ENCODE measurements at regions of chr9 and their contacts with region 1.

Region 1: DNA sequence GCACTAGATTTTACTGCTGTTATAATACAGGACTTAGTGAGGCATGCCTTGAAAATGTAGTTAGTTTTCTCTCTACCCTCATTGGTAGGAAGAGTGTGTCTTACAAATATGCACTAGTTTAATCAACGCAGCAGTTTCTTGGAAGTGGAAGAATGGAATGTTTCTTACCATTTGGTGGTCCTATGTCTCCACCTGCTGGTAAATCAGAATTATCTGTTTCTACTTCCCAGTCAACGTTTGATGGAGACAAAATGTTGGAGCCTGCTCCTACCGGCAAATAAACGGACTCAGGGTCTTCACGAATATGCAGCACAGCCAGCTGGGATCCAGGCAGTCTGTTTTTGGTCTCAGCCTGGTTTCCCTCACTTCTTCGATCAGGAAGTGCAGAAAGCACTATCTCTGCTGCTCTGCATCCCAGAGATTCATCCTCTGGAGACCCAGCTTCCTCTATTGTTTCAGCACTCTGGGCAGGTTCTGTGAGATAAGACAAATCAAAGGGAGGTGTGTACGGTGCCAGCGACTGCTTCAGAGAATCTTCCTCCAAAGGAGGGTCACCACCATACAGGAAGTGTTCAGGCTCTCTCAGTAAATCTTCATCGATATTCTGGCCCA is 59.5 kb upstream of the PCA3 start:
- DNase-seq: no peak
- ATAC-seq: peak; percentile 39
- H3K4me3 Mint-ChIP-seq: no peak overlapping the region
- H3K27ac Mint-ChIP-seq: no peak overlapping the region
- H3K4me1 Mint-ChIP-seq: peaks cover 7% of the 10 kb centered on the region
- H3K27me3 Mint-ChIP-seq: peaks cover 25% of the 10 kb centered on the region

Region 2: DNA sequence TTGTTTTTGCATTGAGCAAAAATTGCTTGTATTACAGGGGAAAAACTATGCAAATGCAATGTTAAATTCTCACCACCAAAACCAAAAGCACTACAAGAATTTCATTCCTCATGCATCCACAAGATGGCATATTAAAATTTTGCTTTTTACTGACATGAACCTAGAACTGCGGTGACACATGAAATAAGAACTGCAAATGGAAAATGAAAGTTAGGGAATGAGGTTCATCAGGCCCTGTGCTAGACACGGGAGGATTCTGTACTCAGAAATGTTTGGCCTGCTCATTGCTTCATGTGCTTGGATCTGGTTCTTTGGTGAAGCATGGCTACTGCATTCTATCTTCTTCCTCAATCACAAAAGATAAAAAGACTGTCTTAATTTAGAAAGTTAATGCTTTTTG is 301.3 kb before region 1 on chr9:
- CTCF ChIA-PET with region 1: interaction called, 16 read pairs
- POLR2A ChIA-PET with region 1: no interaction called
- DNase-seq: peak; percentile 39
- ATAC-seq: peak; percentile 95
- H3K4me3 Mint-ChIP-seq: peak overlapping the region; percentile 59
- H3K27ac Mint-ChIP-seq: peak overlapping the region; percentile 82
- H3K4me1 Mint-ChIP-seq: peaks cover 40% of the 10 kb centered on the region
- H3K27me3 Mint-ChIP-seq: no peaks in the 10 kb centered on the region

Region 3: GRCh38 chr9:76451234-76451633 is 253.5 kb before region 1 on chr9:
- CTCF ChIA-PET with region 1: interaction called, 54 read pairs
- POLR2A ChIA-PET with region 1: no interaction called
- DNase-seq: no peak
- ATAC-seq: no peak
- H3K4me3 Mint-ChIP-seq: no peak overlapping the region
- H3K27ac Mint-ChIP-seq: no peak overlapping the region
- H3K4me1 Mint-ChIP-seq: peaks cover 11% of the 10 kb centered on the region
- H3K27me3 Mint-ChIP-seq: no peaks in the 10 kb centered on the region

Region 4: GRCh38 chr9:76634356-76635022 is 70.2 kb before region 1 on chr9:
- CTCF ChIA-PET with region 1: no interaction called
- POLR2A ChIA-PET with region 1: no interaction called
- DNase-seq: no peak
- ATAC-seq: no peak
- H3K4me3 Mint-ChIP-seq: no peak overlapping the region
- H3K27ac Mint-ChIP-seq: no peak overlapping the region
- H3K4me1 Mint-ChIP-seq: peaks cover 36% of the 10 kb centered on the region
- H3K27me3 Mint-ChIP-seq: no peaks in the 10 kb centered on the region

Region 5: DNA sequence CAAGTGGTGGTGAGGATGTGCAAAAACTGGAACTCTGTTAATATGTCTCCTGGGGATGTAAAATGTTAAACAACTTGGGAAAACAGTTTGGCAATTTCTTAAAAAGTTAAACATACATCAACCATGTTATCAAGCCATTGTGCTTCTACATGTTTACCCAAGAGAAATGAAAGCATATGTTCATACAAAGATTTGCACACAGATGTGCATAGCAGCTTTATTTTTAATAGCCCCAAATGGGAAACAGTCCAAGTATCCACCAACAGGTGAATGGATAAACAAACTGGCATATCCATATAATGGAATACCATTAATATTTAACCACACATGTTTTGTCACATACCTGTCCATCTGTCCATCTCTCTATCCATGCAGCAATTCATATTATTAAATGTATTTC is 478.9 kb after region 1 on chr9:
- CTCF ChIA-PET with region 1: no interaction called
- POLR2A ChIA-PET with region 1: no interaction called
- DNase-seq: no peak
- ATAC-seq: no peak
- H3K4me3 Mint-ChIP-seq: no peak overlapping the region
- H3K27ac Mint-ChIP-seq: no peak overlapping the region
- H3K4me1 Mint-ChIP-seq: peaks cover 18% of the 10 kb centered on the region
- H3K27me3 Mint-ChIP-seq: no peaks in the 10 kb centered on the region

Measured in activated CD8-positive, alpha-beta T cell treated with anti-CD3 and anti-CD28 coated beads, Interleukin-2, amount 10 ng/mL, durations not matched to agents 7 days and 5 days (primary cell).